ENCODE measurements at regions of chr18 and their contacts with region 1.

Region 1: DNA sequence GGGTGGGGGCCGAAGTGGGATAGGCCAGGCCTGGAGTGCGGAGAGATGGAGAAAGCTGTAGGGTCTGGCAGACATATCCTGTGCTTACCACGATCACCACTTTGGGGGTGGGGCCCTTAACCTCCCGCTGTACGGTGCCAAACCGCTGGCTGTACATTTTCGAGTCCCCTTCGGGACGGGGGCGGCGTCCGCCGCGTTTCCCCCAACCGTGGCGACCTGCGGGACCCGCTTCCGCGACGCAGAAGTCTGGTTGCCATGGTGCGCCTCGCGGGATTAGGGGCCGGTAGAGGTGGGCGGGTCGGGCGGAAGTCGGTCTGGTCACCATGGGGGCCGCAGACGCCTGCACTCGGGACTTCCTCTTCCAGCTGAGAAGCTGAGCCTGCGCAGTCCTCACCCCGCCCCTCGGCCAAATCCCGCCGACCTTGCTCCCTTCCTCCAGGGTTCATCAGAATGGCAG is at the start of gene CFAP53:
- DNase-seq: peak; percentile 96 to 97 (median 97)
- ATAC-seq: peak; percentile 98
- H3K4me3 ChIP-seq: peak within 1 kb of the TSS; percentile 83
- H3K27ac ChIP-seq: peak within 1 kb of the TSS; percentile 4
- H3K4me1 ChIP-seq: no peaks in the 10 kb centered on the region
- H3K27me3 ChIP-seq: no peaks in the 10 kb centered on the region
- total RNA-seq, gene CFAP53: 0.23 to 0.56 (median 0.29) TPM

Region 2: GRCh38 chr18:49491857-49492693 is 774.2 kb before region 1 on chr18:
- intact Hi-C with region 1: loop called in 1 of 4 experiments (anchors 10 kb)
- DNase-seq: peak; percentile 85 to 92 (median 86)
- ATAC-seq: peak; percentile 88 to 92
- H3K4me3 ChIP-seq: peak within 1 kb of the TSS; percentile 62
- H3K27ac ChIP-seq: peak within 1 kb of the TSS; percentile 34
- H3K4me1 ChIP-seq: no peaks in the 10 kb centered on the region
- H3K27me3 ChIP-seq: no peaks in the 10 kb centered on the region

Region 3: DNA sequence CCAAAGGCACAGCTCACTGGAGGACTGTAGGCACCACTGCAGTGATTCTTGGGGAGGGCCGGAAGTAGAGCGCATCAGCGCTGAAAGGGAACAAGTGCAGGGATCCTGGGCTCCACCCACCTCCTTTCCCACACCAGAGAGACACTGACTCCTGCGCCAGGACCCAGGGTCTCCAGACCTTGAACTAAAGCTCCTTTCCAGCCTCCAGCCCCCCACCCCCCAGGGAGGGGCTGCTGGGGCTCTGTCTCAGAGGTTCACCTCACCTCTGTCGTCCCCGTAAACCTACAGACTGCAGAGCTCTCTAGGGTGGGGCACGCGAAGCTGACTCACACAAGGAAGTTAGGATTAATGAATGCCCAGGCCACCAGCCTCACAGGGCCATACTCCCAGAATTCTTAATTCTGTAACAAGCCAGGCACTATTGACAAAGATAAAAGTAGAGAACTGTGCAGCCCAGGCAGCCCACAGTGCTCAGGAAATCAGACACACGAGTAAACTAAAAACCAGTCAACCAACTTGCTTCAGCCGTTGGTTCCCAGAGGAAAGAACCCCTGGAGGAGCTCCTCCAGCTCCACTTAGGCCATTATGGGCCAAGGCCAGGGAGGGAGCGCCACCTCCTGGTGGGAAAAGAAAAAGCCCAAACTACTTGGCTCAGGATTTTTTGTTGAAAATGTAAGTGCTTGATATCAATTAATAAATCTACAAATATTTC is 407.8 kb before region 1 on chr18:
- intact Hi-C with region 1: no loop called
- DNase-seq: peak; percentile 54 to 73 (median 73)
- ATAC-seq: peak; percentile 36 to 72
- H3K4me3 ChIP-seq: no peak overlapping the region
- H3K27ac ChIP-seq: no peak overlapping the region
- H3K4me1 ChIP-seq: no peaks in the 10 kb centered on the region
- H3K27me3 ChIP-seq: no peaks in the 10 kb centered on the region